ENCODE measurements at regions of chr2 and their contacts with region 1.

Region 1: DNA sequence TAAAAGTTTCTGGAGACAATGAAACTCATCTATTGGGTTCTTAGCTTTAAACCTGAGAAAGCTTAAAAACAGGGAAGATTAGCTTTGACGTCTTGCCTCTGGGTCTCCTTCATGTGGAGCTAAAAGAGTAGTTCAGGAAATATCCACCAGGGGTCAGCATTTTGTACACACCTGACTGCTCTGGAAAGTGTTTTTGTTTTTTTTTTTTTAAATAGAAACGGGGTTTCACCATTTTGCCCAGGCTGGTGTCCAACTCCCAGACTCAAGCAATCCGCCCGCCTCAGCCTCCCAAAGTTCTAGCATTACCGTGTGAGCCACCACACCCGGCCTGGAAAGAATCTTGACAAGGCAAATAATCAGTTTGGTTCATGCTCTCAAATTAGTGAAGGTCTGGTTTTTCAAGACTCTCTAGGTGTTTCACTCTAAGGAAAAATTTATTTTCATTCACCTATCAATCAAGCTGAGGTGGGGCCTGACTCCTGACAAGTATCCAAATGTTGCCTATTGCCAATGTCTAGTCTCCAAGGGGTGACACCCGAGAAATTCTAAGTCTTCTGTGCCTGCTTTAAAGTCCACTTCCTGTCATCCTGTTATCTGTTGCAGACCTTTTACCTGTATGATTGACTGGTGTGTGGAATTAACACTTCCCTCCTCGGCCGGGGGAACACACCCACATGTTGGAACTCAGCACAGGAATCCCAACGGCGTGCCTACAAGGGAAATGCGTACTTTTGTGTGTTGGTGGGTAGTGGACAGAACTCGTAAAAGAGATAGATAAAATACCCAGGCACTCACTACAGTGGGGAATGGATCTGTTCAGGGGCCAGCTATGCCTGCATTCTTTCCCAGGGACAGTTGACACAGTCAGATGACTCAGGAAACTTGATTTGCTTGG is 11.3 kb downstream of the IL1RN start:
- DNase-seq: peak; percentile 92
- H3K4me3 Mint-ChIP-seq: peak overlapping the region; percentile 34
- H3K27ac Mint-ChIP-seq: peak overlapping the region; percentile 61
- H3K4me1 Mint-ChIP-seq: peaks cover 34% of the 10 kb centered on the region
- H3K27me3 Mint-ChIP-seq: no peaks in the 10 kb centered on the region

Region 2: DNA sequence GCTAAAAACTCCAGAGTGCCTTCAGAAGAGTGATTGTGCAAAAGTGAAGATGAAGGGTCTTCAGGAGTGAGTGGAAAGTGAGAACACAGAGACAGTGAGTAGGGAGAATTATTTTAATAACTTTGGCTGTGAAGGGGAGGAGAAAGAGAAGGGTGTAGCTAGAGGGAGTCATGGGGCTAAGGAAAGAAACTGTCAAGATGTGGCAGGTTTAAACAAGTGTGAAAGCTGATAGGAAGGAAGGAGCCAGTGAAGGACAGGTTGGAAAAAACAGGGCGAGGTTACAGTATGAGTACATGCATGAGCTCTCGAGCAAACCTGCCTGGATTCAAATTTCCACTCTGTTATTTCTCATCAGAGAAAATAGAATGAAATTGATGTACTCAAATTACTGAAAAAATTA is 53.1 kb before region 1 on chr2:
- intact Hi-C with region 1: loop called (anchors 1 kb)
- DNase-seq: no peak
- H3K4me3 Mint-ChIP-seq: no peak overlapping the region
- H3K27ac Mint-ChIP-seq: no peak overlapping the region
- H3K4me1 Mint-ChIP-seq: peaks cover 22% of the 10 kb centered on the region
- H3K27me3 Mint-ChIP-seq: peaks cover 6% of the 10 kb centered on the region

Region 3: DNA sequence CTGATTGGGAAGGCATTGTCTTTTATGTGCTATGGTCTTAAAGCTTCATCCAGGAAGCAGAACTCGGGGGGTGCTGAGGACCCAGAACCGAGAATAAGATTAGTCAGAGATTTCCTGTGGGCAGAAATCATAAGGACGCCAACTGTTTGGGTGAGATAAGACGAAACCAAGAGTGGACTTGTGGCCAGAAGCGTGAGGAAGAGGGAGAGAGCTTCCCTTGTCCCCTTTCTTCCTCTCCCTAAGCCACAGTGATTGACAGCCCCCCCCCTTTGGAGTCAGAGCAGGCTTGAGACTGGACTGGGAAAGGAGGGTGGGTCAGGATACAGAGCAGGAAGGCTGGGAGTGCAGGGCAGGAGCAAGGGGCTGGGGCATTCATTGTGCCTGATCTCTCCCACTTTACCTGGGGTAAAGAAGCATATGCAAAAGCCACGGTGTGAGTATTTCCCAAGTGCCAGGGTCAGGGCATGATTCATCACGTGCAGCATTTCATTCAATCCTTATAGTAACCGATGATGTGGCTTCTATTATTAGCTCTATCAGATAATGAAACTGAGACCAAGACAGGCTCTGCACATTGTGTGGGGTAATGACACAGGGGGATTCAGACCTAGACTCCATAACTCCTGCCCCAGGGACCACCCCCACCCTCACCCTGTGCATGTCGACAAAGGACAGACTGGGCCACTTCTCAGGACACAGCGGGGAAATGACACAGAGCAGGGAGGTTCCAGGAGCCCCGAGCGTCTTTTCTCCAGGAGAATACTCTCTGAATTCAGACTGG is 14.3 kb before region 1 on chr2:
- intact Hi-C with region 1: no loop called
- DNase-seq: no peak
- H3K4me3 Mint-ChIP-seq: peak overlapping the region; percentile 27
- H3K27ac Mint-ChIP-seq: no peak overlapping the region
- H3K4me1 Mint-ChIP-seq: peaks cover 44% of the 10 kb centered on the region
- H3K27me3 Mint-ChIP-seq: peaks cover 2% of the 10 kb centered on the region

Region 4: DNA sequence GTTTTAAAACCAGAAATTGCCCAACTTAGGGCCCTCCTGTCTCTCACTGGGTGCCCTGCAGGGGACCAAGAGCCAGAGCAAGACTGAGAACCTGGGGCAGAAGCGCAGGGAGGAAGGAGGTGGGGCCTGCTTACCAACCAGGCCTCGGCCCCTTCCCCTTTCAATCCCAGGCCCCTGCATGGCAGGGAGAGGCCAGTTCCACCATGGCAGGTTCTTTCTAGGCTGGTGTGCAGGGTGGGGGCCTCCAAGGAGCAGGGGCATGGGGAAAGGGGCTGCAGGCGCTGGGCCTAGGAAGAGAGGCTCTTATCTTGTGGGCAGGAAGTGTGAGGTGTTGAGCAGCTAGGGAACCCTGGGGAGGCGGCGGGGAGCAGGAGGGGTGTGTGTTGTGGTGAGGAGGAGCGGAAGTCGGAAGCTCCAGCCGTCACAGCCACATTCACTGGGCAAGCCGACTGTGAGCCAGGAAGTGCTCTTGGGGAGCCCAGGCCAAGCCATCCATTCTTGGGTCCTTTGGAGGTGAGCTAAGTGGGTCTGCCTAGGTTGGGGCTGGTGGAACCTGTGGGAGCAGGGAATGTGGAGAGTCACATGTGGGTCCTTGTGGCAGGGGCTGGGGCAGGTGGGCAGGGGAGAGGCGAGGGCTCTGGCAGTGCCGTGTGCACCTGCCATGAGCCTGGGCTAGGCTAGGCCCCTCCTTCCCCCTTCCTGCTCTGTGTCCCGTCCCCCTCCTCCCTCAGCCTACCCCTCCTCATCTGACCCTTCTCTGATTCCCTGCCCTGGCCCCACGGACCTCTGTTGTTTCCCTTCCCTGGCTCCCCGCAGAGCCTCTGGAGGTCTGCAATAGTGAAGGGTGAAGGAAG is 35.1 kb after region 1 on chr2 and contains the start of gene PSD4:
- intact Hi-C with region 1: loop called (anchors 1 kb)
- DNase-seq: peak; percentile 96
- H3K4me3 Mint-ChIP-seq: peak within 1 kb of the TSS; percentile 88
- H3K27ac Mint-ChIP-seq: peak within 1 kb of the TSS; percentile 92
- H3K4me1 Mint-ChIP-seq: peaks cover 66% of the 10 kb centered on the region
- H3K27me3 Mint-ChIP-seq: no peaks in the 10 kb centered on the region
- total RNA-seq, gene PSD4: 268 and 278 TPM in 2 replicates

Region 5: GRCh38 chr2:113370478-113371091 is 231.9 kb after region 1 on chr2:
- intact Hi-C with region 1: loop called (anchors 2 kb)
- DNase-seq: peak; percentile 92
- H3K4me3 Mint-ChIP-seq: no peak overlapping the region
- H3K27ac Mint-ChIP-seq: no peak overlapping the region
- H3K4me1 Mint-ChIP-seq: peaks cover 13% of the 10 kb centered on the region
- H3K27me3 Mint-ChIP-seq: peaks cover 8% of the 10 kb centered on the region

Region 6: GRCh38 chr2:113686537-113686936 is 547.9 kb after region 1 on chr2:
- intact Hi-C with region 1: no loop called
- DNase-seq: no peak
- H3K4me3 Mint-ChIP-seq: no peak overlapping the region
- H3K27ac Mint-ChIP-seq: no peak overlapping the region
- H3K4me1 Mint-ChIP-seq: peaks cover 6% of the 10 kb centered on the region
- H3K27me3 Mint-ChIP-seq: peaks cover 5% of the 10 kb centered on the region